ENCODE measurements at regions of chr1 and their contacts with region 1.

Region 1: DNA sequence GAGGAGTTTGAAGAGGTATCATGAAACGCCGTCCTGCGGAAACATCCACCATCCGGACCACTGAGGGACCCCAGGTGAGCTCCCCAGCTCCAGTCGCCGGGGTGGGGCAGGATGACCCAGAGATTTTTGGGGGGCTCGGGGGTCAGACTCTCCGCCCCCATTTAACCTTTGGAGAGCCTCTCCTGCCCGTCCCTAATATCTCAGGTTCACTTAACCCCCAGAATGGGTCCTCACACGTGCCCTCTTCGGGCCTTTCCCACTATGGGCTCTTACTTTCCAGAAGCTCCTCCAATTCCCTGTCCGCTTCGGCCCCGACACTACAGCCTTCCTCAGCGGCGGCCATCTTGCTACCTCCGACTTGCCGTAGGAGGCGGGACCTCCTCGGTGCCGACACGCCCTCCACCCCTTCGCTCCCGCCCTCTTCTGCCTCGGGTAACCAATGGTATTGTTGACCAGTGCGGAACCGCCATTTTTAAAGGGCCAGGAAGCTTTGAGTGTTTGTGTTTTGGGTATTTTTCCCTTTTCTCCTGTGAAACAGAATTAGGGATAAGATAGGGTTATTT is at the start of gene PEX19:
- DNase-seq: peak; percentile 97
- H3K4me3 Mint-ChIP-seq: peak within 1 kb of the TSS; percentile 100
- H3K27ac Mint-ChIP-seq: peak within 1 kb of the TSS; percentile 99
- H3K4me1 Mint-ChIP-seq: peaks cover 19% of the 10 kb centered on the region
- H3K27me3 Mint-ChIP-seq: no peaks in the 10 kb centered on the region
- CTCF ChIP-seq: no peak
- total RNA-seq, gene PEX19: 61.2 and 73.2 TPM in 2 replicates

Region 2: GRCh38 chr1:159945483-159946241 is 339.2 kb before region 1 on chr1 and contains the start of gene IGSF9:
- CTCF ChIA-PET with region 1: no interaction called
- POLR2A ChIA-PET with region 1: no interaction called
- intact Hi-C with region 1: no loop called
- DNase-seq: peak; percentile 86
- H3K4me3 Mint-ChIP-seq: peak within 1 kb of the TSS; percentile 69
- H3K27ac Mint-ChIP-seq: no peak within 1 kb of the TSS
- H3K4me1 Mint-ChIP-seq: peaks cover 45% of the 10 kb centered on the region
- H3K27me3 Mint-ChIP-seq: no peaks in the 10 kb centered on the region
- CTCF ChIP-seq: peak; percentile 37
- total RNA-seq, gene IGSF9: 0.25 and 0.44 TPM in 2 replicates

Region 3: DNA sequence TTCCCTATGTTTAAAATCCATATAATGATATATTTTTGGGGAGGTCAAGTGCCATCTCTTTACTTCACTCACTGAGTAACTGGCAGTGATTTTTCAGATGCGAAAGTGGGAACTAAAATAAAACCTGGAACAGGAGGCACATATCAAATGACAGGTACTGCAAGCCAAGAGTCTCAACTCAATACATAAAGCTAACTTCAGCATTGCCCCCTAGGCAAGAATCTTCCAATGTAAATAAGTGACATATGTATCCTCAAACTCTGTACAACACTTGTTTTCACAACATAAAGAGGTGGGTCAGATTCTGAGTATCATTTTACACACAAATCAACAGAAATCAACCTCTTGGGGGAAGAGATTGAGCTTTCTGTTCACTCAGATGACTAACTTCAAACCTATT is 40.7 kb before region 1 on chr1:
- CTCF ChIA-PET with region 1: interaction called, 3 read pairs
- POLR2A ChIA-PET with region 1: interaction called, 15 read pairs
- intact Hi-C with region 1: no loop called
- DNase-seq: no peak
- H3K4me3 Mint-ChIP-seq: no peak overlapping the region
- H3K27ac Mint-ChIP-seq: no peak overlapping the region
- H3K4me1 Mint-ChIP-seq: peaks cover 7% of the 10 kb centered on the region
- H3K27me3 Mint-ChIP-seq: no peaks in the 10 kb centered on the region
- CTCF ChIP-seq: no peak

Region 4: GRCh38 chr1:160267284-160267991 is 17.4 kb before region 1 on chr1:
- CTCF ChIA-PET with region 1: interaction called, 133 read pairs
- POLR2A ChIA-PET with region 1: interaction called, 247 read pairs
- intact Hi-C with region 1: loop called (anchors 1 kb)
- DNase-seq: no peak
- H3K4me3 Mint-ChIP-seq: no peak overlapping the region
- H3K27ac Mint-ChIP-seq: no peak overlapping the region
- H3K4me1 Mint-ChIP-seq: no peaks in the 10 kb centered on the region
- H3K27me3 Mint-ChIP-seq: peaks cover 16% of the 10 kb centered on the region
- CTCF ChIP-seq: no peak

Region 5: DNA sequence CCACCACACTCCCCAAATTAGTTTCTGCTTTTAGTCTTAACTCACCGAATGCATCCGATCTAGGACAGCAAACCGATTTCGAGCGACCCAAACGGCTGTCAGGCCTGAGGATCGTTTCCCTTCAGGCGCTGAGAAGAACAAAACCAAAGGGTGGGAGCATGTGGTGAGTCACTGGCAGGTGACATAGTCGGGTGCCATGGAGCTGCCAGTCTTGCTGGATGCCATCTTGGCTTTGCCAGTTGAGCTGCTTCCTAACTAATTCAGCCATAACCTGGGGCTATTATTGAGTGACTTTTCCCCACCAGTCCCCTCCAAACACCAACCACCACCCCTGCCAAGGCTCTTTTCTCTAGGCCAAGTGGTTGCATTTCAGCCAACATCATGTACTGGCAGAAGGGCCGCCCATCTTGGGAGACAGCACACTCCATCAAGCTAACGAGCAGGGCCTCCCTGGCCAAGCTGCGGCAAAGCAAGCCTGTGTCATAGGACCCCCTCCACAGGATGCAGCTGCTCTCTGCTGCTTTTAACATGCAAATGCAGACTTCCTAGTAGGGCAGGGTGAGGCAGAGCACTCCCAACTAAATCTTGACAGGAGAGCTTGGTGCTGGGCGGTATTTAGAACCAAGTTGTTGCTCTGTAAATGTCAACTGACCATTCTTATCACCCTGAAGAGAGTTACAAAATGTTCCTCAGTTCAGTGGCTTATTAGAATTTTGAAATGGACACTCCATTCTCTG is 22.4 kb after region 1 on chr1:
- CTCF ChIA-PET with region 1: interaction called, 5 read pairs
- POLR2A ChIA-PET with region 1: interaction called, 10 read pairs
- intact Hi-C with region 1: no loop called
- DNase-seq: no peak
- H3K4me3 Mint-ChIP-seq: no peak overlapping the region
- H3K27ac Mint-ChIP-seq: no peak overlapping the region
- H3K4me1 Mint-ChIP-seq: peaks cover 16% of the 10 kb centered on the region
- H3K27me3 Mint-ChIP-seq: no peaks in the 10 kb centered on the region
- CTCF ChIP-seq: no peak

Region 6: GRCh38 chr1:160428655-160429054 is 143.8 kb after region 1 on chr1:
- CTCF ChIA-PET with region 1: no interaction called
- POLR2A ChIA-PET with region 1: no interaction called
- intact Hi-C with region 1: no loop called
- DNase-seq: peak; percentile 70
- H3K4me3 Mint-ChIP-seq: no peak overlapping the region
- H3K27ac Mint-ChIP-seq: no peak overlapping the region
- H3K4me1 Mint-ChIP-seq: no peaks in the 10 kb centered on the region
- H3K27me3 Mint-ChIP-seq: peaks cover 8% of the 10 kb centered on the region
- CTCF ChIP-seq: peak; percentile 93

Region 7: GRCh38 chr1:160664573-160665051 is 379.7 kb after region 1 on chr1:
- CTCF ChIA-PET with region 1: no interaction called
- POLR2A ChIA-PET with region 1: no interaction called
- intact Hi-C with region 1: no loop called
- DNase-seq: no peak
- H3K4me3 Mint-ChIP-seq: no peak overlapping the region
- H3K27ac Mint-ChIP-seq: no peak overlapping the region
- H3K4me1 Mint-ChIP-seq: no peaks in the 10 kb centered on the region
- H3K27me3 Mint-ChIP-seq: no peaks in the 10 kb centered on the region
- CTCF ChIP-seq: no peak